PC-9 (cell line): ENCODE measurements at regions of chr2 and their contacts with region 1.

Region 1: GRCh38 chr2:78417355-78417754 is 608.1 kb upstream of the REG3G start:
- DNase-seq: no peak
- H3K4me3 ChIP-seq: 0 out of 2 replicates have a peak overlapping the region, but pooled peaks have one; percentile 3
- H3K27ac ChIP-seq: peak overlapping the region; percentile 13; the same call in 1 of the 2 replicates
- H3K4me1 ChIP-seq: peaks cover 27% of the 10 kb centered on the region
- H3K27me3 ChIP-seq: no peaks in the 10 kb centered on the region
- CTCF ChIP-seq: no peak

Region 2: GRCh38 chr2:78455586-78455985 is 38.2 kb after region 1 on chr2:
- CTCF ChIA-PET with region 1: no interaction called
- POLR2A ChIA-PET with region 1: no interaction called
- intact Hi-C with region 1: loop called (anchors 2 kb)
- DNase-seq: no peak
- H3K4me3 ChIP-seq: no peak overlapping the region
- H3K27ac ChIP-seq: no peak overlapping the region
- H3K4me1 ChIP-seq: 0 out of 2 replicates have a peak, but pooled peaks cover 8% of the 10 kb centered on the region
- H3K27me3 ChIP-seq: no peaks in the 10 kb centered on the region
- CTCF ChIP-seq: no peak